ENCODE measurements at regions of chr22 and their contacts with region 1.

Region 1: DNA sequence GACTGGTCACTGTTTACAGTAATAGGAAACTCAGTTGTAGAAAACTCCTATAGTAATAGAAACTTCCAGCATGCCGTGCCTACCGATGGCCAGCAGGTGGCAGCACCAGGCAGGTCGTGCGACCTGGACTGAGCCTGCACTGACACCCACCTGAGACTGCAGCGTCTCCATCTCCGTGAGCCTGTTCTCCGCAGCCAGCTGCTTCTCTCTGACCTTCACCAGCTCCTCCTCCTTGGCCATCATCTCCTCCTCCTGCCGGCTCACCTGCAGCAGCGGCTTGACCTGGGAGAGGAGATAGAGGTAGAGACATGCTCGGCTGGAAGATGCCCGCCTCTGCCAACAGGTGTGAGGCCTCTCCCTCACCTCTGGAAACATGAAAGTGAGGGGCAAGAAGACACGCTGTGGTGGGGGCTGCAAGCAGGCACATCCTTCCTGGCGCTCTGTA is 48.5 kb downstream of the APOL1 start:
- ATAC-seq: peak; percentile 71 to 91 (median 82)
- H3K4me3 ChIP-seq: no peak overlapping the region
- H3K27ac ChIP-seq: no peak overlapping the region
- H3K4me1 ChIP-seq: no peaks in the 10 kb centered on the region

Region 2: GRCh38 chr22:36160499-36160942 is 140.9 kb before region 1 on chr22 and contains the start of gene APOL3:
- in situ Hi-C with region 1: no loop called
- ATAC-seq: peak in 3 of 8 experiments; percentile 69 to 84 (median 76)
- H3K4me3 ChIP-seq: no peak within 1 kb of the TSS
- H3K27ac ChIP-seq: no peak within 1 kb of the TSS
- H3K4me1 ChIP-seq: peaks cover 0 to 7% of the 10 kb centered on the region in 2 donors
- total RNA-seq, gene APOL3: 0.09 to 31.4 (median 2.5) TPM in 7 of 8 experiments, not detected in the other

Region 3: DNA sequence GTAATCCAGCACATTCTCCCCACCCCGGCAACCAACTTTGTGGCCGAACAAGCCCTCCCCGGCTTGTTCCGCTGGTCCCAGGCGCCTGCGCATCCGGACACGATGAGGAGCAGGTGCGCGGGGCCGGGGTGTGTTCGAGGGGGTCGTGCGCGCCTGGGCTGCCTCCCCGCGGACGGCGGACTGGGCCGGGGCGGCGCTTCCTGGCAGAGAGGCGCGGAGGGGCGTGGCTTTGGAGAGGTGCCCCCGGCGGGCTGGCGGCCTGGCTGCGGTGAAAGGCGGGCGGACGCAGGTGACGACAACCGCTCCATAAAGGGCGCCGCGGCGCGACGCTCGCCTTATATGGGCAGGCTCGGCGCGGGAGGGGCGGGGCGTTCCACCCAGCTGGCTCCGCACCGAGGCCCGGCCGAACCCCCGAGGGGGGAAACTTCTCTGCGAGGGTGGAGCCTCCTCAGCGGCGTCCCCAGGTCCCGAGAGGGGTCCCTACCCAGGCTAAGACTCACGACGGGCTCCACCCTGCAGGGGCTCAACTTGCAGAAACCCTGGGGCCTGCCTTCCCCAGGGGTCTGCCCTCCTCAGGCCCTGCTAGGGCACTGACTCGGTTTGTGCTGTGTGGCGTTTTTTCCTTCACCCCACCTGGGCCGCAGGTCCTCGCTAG is 153.6 kb after region 1 on chr22:
- in situ Hi-C with region 1: loop called in 3 of 9 experiments (anchors 10 to 25 kb)
- ATAC-seq: peak; percentile 84 to 95 (median 90)
- H3K4me3 ChIP-seq: peak overlapping the region; percentile 4 to 29 (median 21)
- H3K27ac ChIP-seq: peak overlapping the region; percentile 19 to 65
- H3K4me1 ChIP-seq: peaks cover 3 to 12% of the 10 kb centered on the region in 2 donors

Region 4: GRCh38 chr22:36461669-36462649 is 160.6 kb after region 1 on chr22:
- in situ Hi-C with region 1: loop called in 4 of 9 experiments (anchors 5 to 25 kb)
- ATAC-seq: peak; percentile 19 to 86 (median 64)
- H3K4me3 ChIP-seq: no peak overlapping the region
- H3K27ac ChIP-seq: no peak overlapping the region
- H3K4me1 ChIP-seq: no peaks in the 10 kb centered on the region

Region 5: DNA sequence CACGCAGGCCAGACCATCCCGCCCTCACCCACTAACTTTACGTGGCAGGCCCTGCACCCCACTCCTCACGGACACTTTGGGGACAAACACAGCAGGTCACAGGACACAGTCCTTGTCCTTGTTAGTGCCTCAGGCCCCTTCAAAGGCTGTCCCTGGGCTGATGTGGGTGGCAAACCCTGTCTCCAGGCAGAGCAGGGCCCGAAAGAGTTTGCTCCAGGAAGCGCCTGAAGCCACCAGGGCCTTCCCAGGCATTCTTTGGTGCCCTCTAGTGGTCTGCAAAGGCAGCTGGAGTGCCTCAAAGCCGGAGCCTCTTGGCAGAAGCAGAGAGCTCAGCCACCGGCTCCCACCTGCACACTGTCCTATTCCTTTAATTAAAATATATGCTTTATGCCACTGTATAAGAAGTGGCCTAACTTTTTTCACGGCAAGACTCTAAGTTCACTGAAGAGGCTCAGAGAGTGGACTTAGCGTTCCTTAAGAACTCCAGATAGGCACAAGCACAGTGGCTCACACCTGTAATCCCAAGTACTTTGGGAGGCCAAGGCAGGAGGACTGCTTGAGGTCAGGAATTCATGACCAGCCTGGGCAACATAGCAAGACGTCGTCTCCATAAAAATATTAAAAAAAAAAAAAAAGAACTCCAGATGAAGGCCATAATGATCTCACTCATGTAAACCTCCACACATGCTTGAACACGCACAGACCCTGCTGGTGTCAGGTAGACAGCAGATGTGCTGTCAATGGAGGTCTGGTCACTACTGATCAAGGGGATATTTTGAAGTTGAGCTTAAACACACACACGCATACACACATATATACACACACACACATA is 169.0 kb after region 1 on chr22:
- in situ Hi-C with region 1: loop called in 7 of 9 experiments (anchors 5 to 25 kb)
- ATAC-seq: peak; percentile 64 to 96 (median 86)
- H3K4me3 ChIP-seq: no peak overlapping the region
- H3K27ac ChIP-seq: no peak overlapping the region
- H3K4me1 ChIP-seq: peaks cover 0 to 2% of the 10 kb centered on the region in 2 donors

Region 6: DNA sequence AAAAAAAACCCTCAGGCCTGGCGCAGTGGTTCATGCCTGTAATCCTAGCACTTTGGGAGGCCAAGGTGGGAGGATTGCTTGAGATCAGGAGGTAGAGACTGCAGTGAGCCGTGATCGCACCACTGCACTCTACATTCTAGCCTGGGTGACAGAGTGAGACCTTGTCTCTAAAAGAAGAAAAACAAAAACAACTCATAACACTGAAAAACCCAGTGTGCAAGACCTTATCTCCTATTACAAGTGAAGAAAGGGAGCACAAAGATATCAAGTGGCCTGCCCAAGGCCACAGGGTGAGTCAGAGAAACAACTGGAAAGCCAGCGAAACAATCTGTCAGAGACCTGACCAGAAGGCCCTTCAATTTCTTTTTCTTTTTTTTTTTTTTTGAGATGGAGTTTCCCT is 177.6 kb after region 1 on chr22:
- in situ Hi-C with region 1: loop called in 5 of 9 experiments (anchors 5 to 25 kb)
- ATAC-seq: no peak
- H3K4me3 ChIP-seq: no peak overlapping the region
- H3K27ac ChIP-seq: no peak overlapping the region
- H3K4me1 ChIP-seq: peaks cover 13 to 14% of the 10 kb centered on the region in 2 donors

Measured in motor neuron (in vitro differentiated cells).